PC-9 (cell line): ENCODE measurements at regions of chr15 and their contacts with region 1.

Region 1: GRCh38 chr15:80588801-80589200 is 106.3 kb upstream of the ABHD17C start:
- DNase-seq: peak; percentile 34 to 99
- H3K4me3 ChIP-seq: no peak overlapping the region
- H3K27ac ChIP-seq: peak overlapping the region; percentile 90
- H3K4me1 ChIP-seq: peaks cover 51% of the 10 kb centered on the region
- H3K27me3 ChIP-seq: no peaks in the 10 kb centered on the region
- CTCF ChIP-seq: no peak

Region 2: GRCh38 chr15:80518522-80518921 is 70.3 kb before region 1 on chr15:
- CTCF ChIA-PET with region 1: interaction called, 32 read pairs
- POLR2A ChIA-PET with region 1: no interaction called
- intact Hi-C with region 1: no loop called
- DNase-seq: no peak
- H3K4me3 ChIP-seq: no peak overlapping the region
- H3K27ac ChIP-seq: no peak overlapping the region
- H3K4me1 ChIP-seq: no peaks in the 10 kb centered on the region
- H3K27me3 ChIP-seq: no peaks in the 10 kb centered on the region
- CTCF ChIP-seq: no peak

Region 3: DNA sequence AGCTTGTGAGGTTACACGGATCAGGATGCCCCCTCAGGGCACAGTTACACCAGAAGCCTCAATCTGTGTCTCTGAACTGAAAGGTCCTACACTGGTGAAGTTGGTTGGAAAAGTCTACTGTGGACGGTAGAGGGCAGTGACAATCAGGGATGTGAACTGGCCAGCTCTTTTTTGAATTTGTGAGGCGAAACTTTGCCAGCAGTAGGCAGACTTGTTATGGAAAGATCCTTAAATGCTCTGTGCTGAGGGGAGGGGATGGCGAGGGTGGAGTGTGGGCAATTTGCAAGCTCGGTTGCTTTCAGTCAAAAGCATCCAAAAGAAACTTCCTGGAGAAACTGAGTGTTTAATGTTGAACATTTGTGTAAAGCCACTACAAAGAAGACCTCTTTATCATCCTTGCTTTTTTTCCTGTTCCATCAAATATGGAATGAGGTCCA is 21.1 kb before region 1 on chr15:
- CTCF ChIA-PET with region 1: interaction called, 6 read pairs
- POLR2A ChIA-PET with region 1: no interaction called
- intact Hi-C with region 1: loop called (anchors 1 kb)
- DNase-seq: peak; percentile 54 to 66
- H3K4me3 ChIP-seq: no peak overlapping the region
- H3K27ac ChIP-seq: no peak overlapping the region
- H3K4me1 ChIP-seq: 0 out of 2 replicates have a peak, but pooled peaks cover 4% of the 10 kb centered on the region
- H3K27me3 ChIP-seq: no peaks in the 10 kb centered on the region
- CTCF ChIP-seq: peak; percentile 80

Region 4: GRCh38 chr15:80629355-80629754 is 40.6 kb after region 1 on chr15:
- CTCF ChIA-PET with region 1: no interaction called
- POLR2A ChIA-PET with region 1: no interaction called
- intact Hi-C with region 1: no loop called
- DNase-seq: no peak
- H3K4me3 ChIP-seq: no peak overlapping the region
- H3K27ac ChIP-seq: no peak overlapping the region
- H3K4me1 ChIP-seq: no peaks in the 10 kb centered on the region
- H3K27me3 ChIP-seq: no peaks in the 10 kb centered on the region
- CTCF ChIP-seq: no peak

Region 5: GRCh38 chr15:80660122-80660521 is 71.3 kb after region 1 on chr15:
- CTCF ChIA-PET with region 1: interaction called, 16 read pairs
- POLR2A ChIA-PET with region 1: no interaction called
- intact Hi-C with region 1: no loop called
- DNase-seq: peak in 1 of 2 experiments; percentile 15
- H3K4me3 ChIP-seq: no peak overlapping the region
- H3K27ac ChIP-seq: peak overlapping the region; percentile 43
- H3K4me1 ChIP-seq: peaks cover 40% of the 10 kb centered on the region
- H3K27me3 ChIP-seq: no peaks in the 10 kb centered on the region
- CTCF ChIP-seq: no peak

Region 6: GRCh38 chr15:80679167-80680131 is 90.6 kb after region 1 on chr15:
- CTCF ChIA-PET with region 1: no interaction called
- POLR2A ChIA-PET with region 1: no interaction called
- intact Hi-C with region 1: loop called (anchors 1 kb)
- DNase-seq: peak; percentile 80 to 97
- H3K4me3 ChIP-seq: peak overlapping the region; percentile 27; the same call in 1 of the 2 replicates
- H3K27ac ChIP-seq: peak overlapping the region; percentile 90
- H3K4me1 ChIP-seq: peaks cover 67% of the 10 kb centered on the region
- H3K27me3 ChIP-seq: no peaks in the 10 kb centered on the region
- CTCF ChIP-seq: no peak

Region 7: GRCh38 chr15:80887148-80887547 is 298.3 kb after region 1 on chr15:
- CTCF ChIA-PET with region 1: interaction called, 10 read pairs
- POLR2A ChIA-PET with region 1: no interaction called
- intact Hi-C with region 1: no loop called
- DNase-seq: peak in 1 of 2 experiments; percentile 46
- H3K4me3 ChIP-seq: no peak overlapping the region
- H3K27ac ChIP-seq: no peak overlapping the region
- H3K4me1 ChIP-seq: 0 out of 2 replicates have a peak, but pooled peaks cover 8% of the 10 kb centered on the region
- H3K27me3 ChIP-seq: no peaks in the 10 kb centered on the region
- CTCF ChIP-seq: no peak